Activated naive CD4-positive, alpha-beta T cell treated with anti-CD3 and anti-CD28 coated beads for 36 hours (primary cell): ENCODE measurements at regions of chr12 and their contacts with region 1.

Region 1: GRCh38 chr12:120086801-120087621 is 29.5 kb downstream of the RAB35 start:
- DNase-seq: peak; percentile 100
- H3K4me3 Mint-ChIP-seq: peak overlapping the region; percentile 63
- H3K27ac Mint-ChIP-seq: peak overlapping the region; percentile 85
- H3K4me1 Mint-ChIP-seq: peaks cover 41% of the 10 kb centered on the region
- H3K27me3 Mint-ChIP-seq: no peaks in the 10 kb centered on the region

Region 2: DNA sequence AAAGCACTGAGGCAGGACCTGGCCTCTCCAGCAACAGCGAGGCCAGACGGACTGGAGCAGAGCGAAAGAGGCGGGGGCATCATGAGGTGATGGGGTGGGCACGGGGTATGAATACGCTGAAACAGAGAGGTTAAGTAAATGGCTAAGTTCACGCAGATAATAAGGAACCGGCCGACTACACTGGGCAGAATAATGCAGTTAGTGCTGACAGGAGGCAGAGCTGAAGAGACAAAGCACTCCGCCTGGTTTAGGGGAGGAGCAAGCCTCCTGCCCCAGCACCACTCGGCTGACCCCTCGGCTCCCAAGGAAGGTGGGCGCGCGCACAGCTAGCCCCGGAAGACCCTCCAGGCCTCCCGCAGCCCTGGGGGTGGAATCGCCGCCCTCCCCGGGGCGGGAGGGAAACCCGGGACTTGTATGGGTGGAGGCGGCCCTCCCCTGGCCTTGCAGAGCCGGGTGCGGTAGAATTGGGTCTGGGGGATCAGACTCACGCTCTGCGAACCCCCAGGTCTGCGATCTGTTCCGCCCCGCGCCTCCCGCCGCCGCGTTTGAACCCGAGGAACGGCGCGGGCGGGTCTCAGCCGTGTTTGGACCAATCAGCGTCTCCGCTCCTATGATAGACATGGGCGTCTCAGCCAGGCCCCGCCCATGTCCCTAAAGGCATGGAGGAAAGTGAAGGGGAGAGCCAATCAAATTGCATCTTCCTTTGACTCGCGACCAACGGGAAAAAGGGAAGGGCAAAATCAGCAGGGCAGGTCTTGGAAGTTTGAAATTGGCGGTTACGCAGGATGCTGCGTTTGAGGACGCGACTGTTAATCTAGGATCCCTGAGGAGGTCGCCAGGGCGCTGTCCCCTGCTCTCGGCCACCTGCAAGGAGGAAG is 210.0 kb before region 1 on chr12 and contains the start of gene CIT:
- CTCF ChIA-PET with region 1: no interaction called
- intact Hi-C with region 1: loop called (anchors 1 kb)
- DNase-seq: peak; percentile 94
- H3K4me3 Mint-ChIP-seq: peak within 1 kb of the TSS; percentile 97
- H3K27ac Mint-ChIP-seq: peak within 1 kb of the TSS; percentile 42
- H3K4me1 Mint-ChIP-seq: peaks cover 13% of the 10 kb centered on the region
- H3K27me3 Mint-ChIP-seq: no peaks in the 10 kb centered on the region
- total RNA-seq, gene CIT: 78.6 to 78.8 TPM

Region 3: GRCh38 chr12:119988782-119989668 is 98.0 kb before region 1 on chr12 and contains the start of gene BICDL1:
- CTCF ChIA-PET with region 1: interaction called, 6 read pairs
- intact Hi-C with region 1: loop called (anchors 1 kb)
- DNase-seq: peak; percentile 97
- H3K4me3 Mint-ChIP-seq: peak within 1 kb of the TSS; percentile 91
- H3K27ac Mint-ChIP-seq: peak within 1 kb of the TSS; percentile 93
- H3K4me1 Mint-ChIP-seq: peaks cover 45% of the 10 kb centered on the region
- H3K27me3 Mint-ChIP-seq: no peaks in the 10 kb centered on the region
- total RNA-seq, gene BICDL1: 128 to 133 TPM

Region 4: GRCh38 chr12:120175062-120175461 is 88.1 kb after region 1 on chr12:
- CTCF ChIA-PET with region 1: no interaction called
- intact Hi-C with region 1: no loop called
- DNase-seq: no peak
- H3K4me3 Mint-ChIP-seq: no peak overlapping the region
- H3K27ac Mint-ChIP-seq: no peak overlapping the region
- H3K4me1 Mint-ChIP-seq: no peaks in the 10 kb centered on the region
- H3K27me3 Mint-ChIP-seq: no peaks in the 10 kb centered on the region

Region 5: DNA sequence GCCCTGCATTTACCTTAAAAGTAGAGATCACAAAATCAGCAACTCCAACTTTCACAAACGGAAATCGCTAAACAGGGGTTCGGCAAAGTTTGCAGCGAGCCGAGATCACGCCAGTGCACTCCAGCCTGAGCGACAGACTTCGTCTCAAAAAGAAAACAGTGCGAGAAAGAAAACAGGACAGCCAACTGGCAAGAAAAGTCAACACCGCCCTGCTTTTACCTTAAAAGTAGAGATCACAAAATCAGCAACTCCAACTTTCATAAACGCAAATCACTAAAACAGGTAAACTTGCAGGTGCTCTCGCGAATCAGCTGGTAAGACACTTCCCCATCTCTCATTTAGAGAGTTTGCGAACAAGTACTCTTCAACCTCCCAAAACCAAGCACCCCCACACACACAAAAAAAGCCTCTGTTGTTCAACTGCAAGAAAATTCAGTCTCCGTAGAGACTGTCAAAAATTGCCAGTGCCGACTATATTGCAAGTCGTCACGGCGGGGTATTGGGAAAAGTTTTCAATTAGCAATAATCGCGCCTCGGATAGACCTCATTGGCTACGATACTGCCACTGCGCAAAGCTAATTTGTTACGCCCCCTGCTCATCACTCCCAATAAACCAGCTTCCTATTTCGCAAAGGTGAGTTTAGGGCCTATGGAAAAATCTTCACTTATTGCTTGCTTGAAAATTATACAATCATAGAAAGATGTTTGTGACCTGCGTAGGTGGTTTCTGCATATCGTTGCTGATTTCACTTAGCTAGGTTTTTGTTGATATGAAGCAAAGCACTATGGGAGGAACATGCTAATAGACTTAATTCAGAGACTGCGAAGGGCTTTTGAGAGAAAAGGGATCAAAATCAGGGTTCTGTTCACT is 205.9 kb after region 1 on chr12 and contains the start of gene RNU4-1:
- CTCF ChIA-PET with region 1: no interaction called
- intact Hi-C with region 1: loop called (anchors 1 kb)
- DNase-seq: peak; percentile 88
- H3K4me3 Mint-ChIP-seq: no peak within 1 kb of the TSS
- H3K27ac Mint-ChIP-seq: no peak within 1 kb of the TSS
- H3K4me1 Mint-ChIP-seq: peaks cover 6% of the 10 kb centered on the region
- H3K27me3 Mint-ChIP-seq: no peaks in the 10 kb centered on the region
- total RNA-seq, gene RNU4-1: 685 to 1,294 TPM